Mammary epithelial cell (primary cell): ENCODE measurements at regions of chr2 and their contacts with region 1.

Region 1: DNA sequence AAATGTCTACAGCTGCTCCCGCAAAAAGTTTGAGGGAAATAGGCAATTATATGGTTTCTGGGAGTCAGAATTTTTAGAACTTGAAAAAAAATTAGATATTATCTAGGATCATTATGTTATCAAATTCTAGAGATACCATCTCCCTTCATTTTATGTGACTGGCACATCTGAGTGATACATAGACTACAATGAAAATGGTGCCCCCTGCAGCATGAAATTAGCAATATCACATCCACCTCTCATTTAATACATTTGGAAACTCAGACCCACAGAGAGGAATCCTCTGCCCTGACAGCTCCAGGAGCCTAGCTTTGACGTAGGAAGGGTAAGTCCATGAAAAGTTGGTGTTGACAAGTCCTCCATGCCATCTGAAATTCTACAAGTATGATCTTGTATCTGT is 381.6 kb downstream of the SUCLG1 start:
- DNase-seq: peak; percentile 39
- H3K4me3 ChIP-seq: no peak overlapping the region
- H3K27ac ChIP-seq: no peak overlapping the region
- H3K4me1 ChIP-seq: no peaks in the 10 kb centered on the region
- H3K27me3 ChIP-seq: no peaks in the 10 kb centered on the region
- CTCF ChIP-seq: peak; percentile 47 to 65

Region 2: GRCh38 chr2:83674050-83674449 is 403.4 kb before region 1 on chr2:
- CTCF ChIA-PET with region 1: no interaction called
- dilution Hi-C with region 1: no loop called
- in situ Hi-C with region 1: no loop called
- intact Hi-C with region 1: no loop called
- DNase-seq: no peak
- H3K4me3 ChIP-seq: no peak overlapping the region
- H3K27ac ChIP-seq: no peak overlapping the region
- H3K4me1 ChIP-seq: no peaks in the 10 kb centered on the region
- H3K27me3 ChIP-seq: no peaks in the 10 kb centered on the region
- CTCF ChIP-seq: no peak

Region 3: GRCh38 chr2:83782122-83782521 is 295.4 kb before region 1 on chr2:
- CTCF ChIA-PET with region 1: no interaction called
- dilution Hi-C with region 1: no loop called
- in situ Hi-C with region 1: no loop called
- intact Hi-C with region 1: loop called (anchors 5 kb)
- DNase-seq: no peak
- H3K4me3 ChIP-seq: no peak overlapping the region
- H3K27ac ChIP-seq: no peak overlapping the region
- H3K4me1 ChIP-seq: no peaks in the 10 kb centered on the region
- H3K27me3 ChIP-seq: no peaks in the 10 kb centered on the region
- CTCF ChIP-seq: peak; percentile 2 to 22

Region 4: GRCh38 chr2:83827618-83828017 is 249.9 kb before region 1 on chr2:
- CTCF ChIA-PET with region 1: no interaction called
- dilution Hi-C with region 1: no loop called
- in situ Hi-C with region 1: no loop called
- intact Hi-C with region 1: loop called (anchors 1 kb)
- DNase-seq: no peak
- H3K4me3 ChIP-seq: no peak overlapping the region
- H3K27ac ChIP-seq: no peak overlapping the region
- H3K4me1 ChIP-seq: no peaks in the 10 kb centered on the region
- H3K27me3 ChIP-seq: no peaks in the 10 kb centered on the region
- CTCF ChIP-seq: peak; percentile 42 to 62

Region 5: DNA sequence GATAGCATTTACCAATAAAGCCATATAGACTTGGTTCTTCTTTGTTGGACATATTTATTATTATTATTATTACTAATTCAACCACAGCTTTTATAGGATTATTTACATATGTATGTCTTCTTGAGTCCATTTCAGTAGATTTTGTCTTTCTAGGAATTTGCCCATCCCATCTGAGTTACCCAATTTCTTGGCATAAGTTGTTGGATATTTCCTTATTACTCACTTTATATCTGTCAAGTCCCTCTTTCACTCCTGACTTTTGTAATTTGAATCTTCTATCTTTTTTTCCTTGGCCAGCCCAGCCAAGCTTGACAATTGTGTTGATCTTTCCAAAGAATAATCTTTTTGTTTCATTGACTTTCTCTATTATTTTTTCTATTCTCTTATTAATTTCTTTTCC is 162.1 kb before region 1 on chr2:
- CTCF ChIA-PET with region 1: no interaction called
- dilution Hi-C with region 1: no loop called
- in situ Hi-C with region 1: no loop called
- intact Hi-C with region 1: no loop called
- DNase-seq: peak; percentile 1
- H3K4me3 ChIP-seq: no peak overlapping the region
- H3K27ac ChIP-seq: no peak overlapping the region
- H3K4me1 ChIP-seq: no peaks in the 10 kb centered on the region
- H3K27me3 ChIP-seq: peaks cover 5% of the 10 kb centered on the region
- CTCF ChIP-seq: no peak

Region 6: DNA sequence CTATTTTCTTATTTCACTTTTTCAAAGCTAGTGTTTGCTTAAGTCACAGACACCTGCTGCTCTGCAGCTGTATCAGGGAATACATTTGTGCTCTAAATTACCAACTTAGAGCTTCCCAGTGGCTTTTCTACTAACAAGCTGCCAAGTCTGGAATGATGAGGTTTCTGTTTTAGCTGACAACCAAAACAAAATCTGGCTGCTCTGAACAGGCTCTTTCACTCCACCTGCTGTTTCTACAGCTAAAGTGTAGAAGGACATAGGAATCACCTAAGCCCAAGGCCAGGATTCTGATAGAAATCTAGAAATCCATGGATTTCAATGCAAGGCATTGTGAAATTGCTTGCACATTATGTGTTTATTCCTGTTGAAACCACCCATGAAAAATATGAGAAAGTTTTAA is 180.3 kb after region 1 on chr2:
- CTCF ChIA-PET with region 1: no interaction called
- dilution Hi-C with region 1: no loop called
- in situ Hi-C with region 1: no loop called
- intact Hi-C with region 1: loop called (anchors 5 kb)
- DNase-seq: peak; percentile 28
- H3K4me3 ChIP-seq: no peak overlapping the region
- H3K27ac ChIP-seq: no peak overlapping the region
- H3K4me1 ChIP-seq: no peaks in the 10 kb centered on the region
- H3K27me3 ChIP-seq: peaks cover under 1% of the 10 kb centered on the region
- CTCF ChIP-seq: peak; percentile 31 to 58